ENCODE measurements at regions of chr20 and their contacts with region 1.

Region 1: DNA sequence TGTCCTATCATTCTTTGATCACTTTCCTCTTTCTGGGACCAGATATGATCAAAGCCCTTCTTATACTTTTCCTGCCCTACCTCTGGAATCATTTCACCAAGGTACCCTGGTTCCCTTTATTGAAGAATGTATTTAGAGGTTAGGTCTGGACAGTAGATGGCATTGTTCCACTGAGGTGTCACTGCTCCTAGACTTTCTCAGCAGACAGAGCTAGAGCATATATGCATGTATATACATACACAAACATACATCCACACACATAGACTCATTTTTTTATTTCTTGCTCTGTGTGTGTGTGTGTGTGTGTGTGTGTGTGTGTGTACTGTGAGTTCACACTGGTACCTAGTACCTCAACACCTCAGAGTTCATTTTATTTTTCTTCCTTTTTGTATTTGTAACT is 40.9 kb downstream of the PTPRA start:
- DNase-seq: peak; percentile 71
- ATAC-seq: peak; percentile 93
- H3K4me3 ChIP-seq: no peak overlapping the region
- H3K27ac ChIP-seq: no peak overlapping the region
- H3K4me1 ChIP-seq: peaks cover 12% of the 10 kb centered on the region
- H3K27me3 ChIP-seq: no peaks in the 10 kb centered on the region
- CTCF ChIP-seq: peak; percentile 93
- EP300 ChIP-seq: no peak
- POLR2A ChIP-seq: no peak
- RAD21 ChIP-seq: peak; percentile 77

Region 2: DNA sequence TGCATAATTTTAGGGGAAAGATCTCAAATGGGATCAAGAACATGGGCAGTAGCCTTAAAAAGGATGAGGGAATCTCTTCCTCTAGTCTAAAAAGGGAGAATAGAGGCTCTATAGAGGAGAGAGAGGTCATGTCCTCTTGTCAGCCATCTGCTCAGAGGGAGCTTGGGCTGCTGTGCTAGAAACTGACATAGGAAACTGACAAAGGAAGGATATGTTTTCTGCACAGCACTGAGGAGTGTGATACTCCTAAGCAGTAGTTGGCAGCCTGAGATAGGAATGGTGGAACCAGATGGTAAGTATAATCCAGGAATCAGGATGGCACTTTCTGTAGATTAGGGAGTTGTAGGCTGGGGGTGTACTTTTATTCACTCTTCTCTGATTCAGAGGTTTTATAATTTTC is 18.3 kb after region 1 on chr20:
- CTCF ChIA-PET with region 1: no interaction called
- POLR2A ChIA-PET with region 1: no interaction called
- in situ Hi-C with region 1: no loop called
- intact Hi-C with region 1: no loop called
- DNase-seq: no peak
- ATAC-seq: no peak
- H3K4me3 ChIP-seq: no peak overlapping the region
- H3K27ac ChIP-seq: no peak overlapping the region
- H3K4me1 ChIP-seq: no peaks in the 10 kb centered on the region
- H3K27me3 ChIP-seq: no peaks in the 10 kb centered on the region
- CTCF ChIP-seq: no peak
- EP300 ChIP-seq: no peak
- POLR2A ChIP-seq: no peak
- RAD21 ChIP-seq: no peak

Region 3: GRCh38 chr20:2946988-2947961 is 33.1 kb after region 1 on chr20:
- CTCF ChIA-PET with region 1: no interaction called
- POLR2A ChIA-PET with region 1: interaction called, 3 read pairs
- in situ Hi-C with region 1: no loop called
- intact Hi-C with region 1: loop called (anchors 1 kb)
- DNase-seq: peak; percentile 100
- ATAC-seq: peak; percentile 100
- H3K4me3 ChIP-seq: peak overlapping the region in 2 of 3 experiments; percentile 18 to 34; a peak in 3 of 6 replicates
- H3K27ac ChIP-seq: peak overlapping the region; percentile 79
- H3K4me1 ChIP-seq: peaks cover 32% of the 10 kb centered on the region
- H3K27me3 ChIP-seq: no peaks in the 10 kb centered on the region
- CTCF ChIP-seq: peak; percentile 25; the same call in 1 of the 2 replicates
- EP300 ChIP-seq: peak; percentile 93 to 96
- POLR2A ChIP-seq: peak in 1 of 2 experiments; percentile 50; a peak in 2 of 4 replicates
- RAD21 ChIP-seq: peak; percentile 59

Region 4: GRCh38 chr20:2978519-2978918 is 64.4 kb after region 1 on chr20:
- CTCF ChIA-PET with region 1: interaction called, 4 read pairs
- POLR2A ChIA-PET with region 1: no interaction called
- in situ Hi-C with region 1: loop called (anchors 5 kb)
- intact Hi-C with region 1: loop called (anchors 1 kb)
- DNase-seq: no peak
- ATAC-seq: no peak
- H3K4me3 ChIP-seq: no peak overlapping the region
- H3K27ac ChIP-seq: no peak overlapping the region
- H3K4me1 ChIP-seq: peaks cover 10% of the 10 kb centered on the region
- H3K27me3 ChIP-seq: no peaks in the 10 kb centered on the region
- CTCF ChIP-seq: no peak
- EP300 ChIP-seq: no peak
- POLR2A ChIP-seq: no peak
- RAD21 ChIP-seq: no peak

Region 5: DNA sequence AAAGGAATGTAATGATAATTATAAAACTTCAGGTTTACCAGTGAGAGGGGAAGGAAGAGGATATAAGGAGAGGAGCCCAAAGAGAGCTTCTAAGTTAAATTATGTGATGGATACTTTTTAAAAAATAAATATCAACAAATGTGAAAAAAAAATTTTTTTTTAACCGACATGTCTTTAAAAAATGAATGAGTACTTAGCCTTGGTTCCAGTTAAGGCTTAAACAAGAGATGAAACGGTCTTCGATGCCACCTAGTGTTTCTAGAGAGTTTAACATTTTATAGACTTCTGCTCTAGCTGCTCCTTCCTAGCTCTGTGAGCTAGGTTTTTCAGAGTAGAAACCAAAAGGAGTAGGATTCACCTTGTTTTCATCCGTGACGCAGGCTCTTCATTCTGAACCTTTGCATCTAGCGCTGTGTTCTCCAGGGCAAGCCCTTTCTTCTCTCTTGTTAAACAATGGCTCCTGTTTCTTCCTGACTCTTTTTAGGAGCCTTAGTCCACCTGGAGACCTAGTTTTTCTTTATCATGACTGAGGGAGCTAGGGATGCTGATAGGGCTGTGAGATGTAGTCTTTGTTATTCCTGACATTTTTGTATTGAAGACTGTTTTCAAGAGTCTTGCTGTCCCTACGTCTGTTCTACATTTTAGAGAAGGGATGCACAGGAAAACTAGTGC is 86.8 kb after region 1 on chr20:
- CTCF ChIA-PET with region 1: no interaction called
- POLR2A ChIA-PET with region 1: no interaction called
- in situ Hi-C with region 1: no loop called
- intact Hi-C with region 1: loop called (anchors 5 kb)
- DNase-seq: no peak
- ATAC-seq: no peak
- H3K4me3 ChIP-seq: no peak overlapping the region
- H3K27ac ChIP-seq: no peak overlapping the region
- H3K4me1 ChIP-seq: peaks cover 10% of the 10 kb centered on the region
- H3K27me3 ChIP-seq: no peaks in the 10 kb centered on the region
- CTCF ChIP-seq: no peak
- EP300 ChIP-seq: no peak
- POLR2A ChIP-seq: no peak
- RAD21 ChIP-seq: no peak

Region 6: DNA sequence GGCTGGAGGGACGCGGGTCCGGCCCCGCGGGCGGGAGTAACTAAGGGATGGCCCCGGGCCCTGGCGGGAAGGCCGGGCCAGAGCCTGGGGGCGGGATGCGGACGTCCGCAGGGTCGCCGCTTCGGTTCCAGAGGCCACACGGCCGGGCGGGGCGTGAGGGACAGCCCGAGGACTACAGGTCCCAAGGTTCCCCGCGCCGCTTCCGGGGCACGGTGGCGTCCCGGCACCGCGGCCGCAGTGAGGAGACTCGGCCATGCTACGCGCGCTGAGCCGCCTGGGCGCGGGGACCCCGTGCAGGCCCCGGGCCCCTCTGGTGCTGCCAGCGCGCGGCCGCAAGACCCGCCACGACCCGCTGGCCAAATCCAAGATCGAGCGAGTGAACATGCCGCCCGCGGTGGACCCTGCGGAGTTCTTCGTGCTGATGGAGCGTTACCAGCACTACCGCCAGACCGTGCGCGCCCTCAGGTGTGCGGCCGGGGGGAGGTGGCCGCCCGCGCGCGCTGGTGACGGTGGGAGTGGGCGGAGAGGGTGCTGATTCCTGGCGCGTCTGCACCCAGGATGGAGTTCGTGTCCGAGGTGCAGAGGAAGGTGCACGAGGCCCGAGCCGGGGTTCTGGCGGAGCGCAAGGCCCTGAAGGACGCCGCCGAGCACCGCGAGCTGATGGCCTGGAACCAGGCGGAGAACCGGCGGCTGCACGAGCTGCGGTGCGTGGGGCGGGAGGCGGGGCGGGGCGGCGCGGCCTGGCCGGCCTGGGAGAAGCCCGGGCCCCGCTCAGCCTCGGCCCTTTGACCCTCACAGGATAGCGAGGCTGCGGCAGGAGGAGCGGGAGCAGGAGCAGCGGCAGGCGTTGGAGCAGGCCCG is 131.9 kb after region 1 on chr20 and contains the start of gene MRPS26:
- CTCF ChIA-PET with region 1: no interaction called
- POLR2A ChIA-PET with region 1: no interaction called
- in situ Hi-C with region 1: no loop called
- intact Hi-C with region 1: loop called (anchors 10 kb)
- DNase-seq: peak; percentile 91
- ATAC-seq: peak; percentile 95
- H3K4me3 ChIP-seq: peak within 1 kb of the TSS; percentile 89 to 97 (median 95)
- H3K27ac ChIP-seq: peak within 1 kb of the TSS; percentile 85
- H3K4me1 ChIP-seq: peaks cover 42% of the 10 kb centered on the region
- H3K27me3 ChIP-seq: no peaks in the 10 kb centered on the region; a peak in 1 of 5 replicates
- CTCF ChIP-seq: peak; percentile 57
- EP300 ChIP-seq: peak in 1 of 2 experiments; percentile 2; a peak in 1 of 4 replicates
- POLR2A ChIP-seq: peak; percentile 77 to 94
- RAD21 ChIP-seq: peak; percentile 65
- total RNA-seq, gene MRPS26: 187 and 201 TPM in 2 replicates

Region 7: DNA sequence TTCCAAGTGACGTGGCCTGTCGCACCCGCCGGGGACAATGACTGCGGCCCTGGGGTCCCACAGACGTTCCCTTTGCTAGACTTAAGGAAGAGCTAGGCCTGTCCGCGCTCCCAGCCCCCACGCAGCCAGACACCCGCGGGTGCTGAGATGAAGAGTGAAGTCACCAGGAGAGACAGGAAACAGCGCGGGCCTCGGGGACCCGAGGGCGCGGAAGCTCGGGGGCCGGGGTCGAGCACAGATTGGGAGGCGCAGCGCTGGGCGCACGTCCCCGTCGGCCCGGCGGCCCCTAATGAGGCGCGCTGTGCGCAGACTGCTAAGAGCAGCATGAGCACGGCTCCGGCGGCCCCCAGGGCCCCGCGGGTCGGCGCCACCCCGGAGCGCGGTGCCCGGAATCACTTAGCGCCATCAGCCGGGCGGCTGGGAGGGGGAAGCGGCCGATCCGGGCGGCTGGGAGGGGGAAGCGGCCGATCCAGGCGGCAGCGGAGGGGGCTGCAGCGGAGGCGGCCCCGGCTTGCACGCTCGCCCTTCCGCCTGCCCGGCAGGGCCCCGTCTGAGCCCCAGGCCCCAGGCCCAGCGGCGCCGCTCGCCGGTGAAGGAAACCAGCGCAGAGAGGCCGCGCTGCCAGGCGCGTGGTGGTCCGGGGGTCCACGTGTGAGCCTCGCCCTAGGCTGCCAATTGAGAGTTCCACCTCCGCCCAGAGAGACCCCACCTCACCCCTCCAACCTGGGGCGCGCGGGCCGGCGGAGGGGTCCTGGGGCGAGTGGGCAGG is 178.6 kb after region 1 on chr20:
- CTCF ChIA-PET with region 1: no interaction called
- POLR2A ChIA-PET with region 1: no interaction called
- in situ Hi-C with region 1: no loop called
- intact Hi-C with region 1: no loop called
- DNase-seq: no peak
- ATAC-seq: no peak
- H3K4me3 ChIP-seq: no peak overlapping the region
- H3K27ac ChIP-seq: no peak overlapping the region
- H3K4me1 ChIP-seq: peaks cover 11% of the 10 kb centered on the region
- H3K27me3 ChIP-seq: peaks cover 4 to 18% of the 10 kb centered on the region in 2 experiments; a peak in 3 of 5 replicates
- CTCF ChIP-seq: no peak
- EP300 ChIP-seq: no peak
- POLR2A ChIP-seq: no peak
- RAD21 ChIP-seq: no peak

Measured in HepG2 (cell line).